ENCODE measurements at regions of chr11 and their contacts with region 1.

Region 1: GRCh38 chr11:65432686-65433582 is 10.3 kb downstream of the NEAT1 start:
- DNase-seq: peak in 4 of 5 donors; percentile 55 to 68 (median 60)
- H3K4me3 ChIP-seq: no peak overlapping the region
- H3K4me3 Mint-ChIP-seq: peak overlapping the region in 5 of 8 donors; percentile 27 to 61 (median 40)
- H3K27ac ChIP-seq: peak overlapping the region; percentile 2
- H3K27ac Mint-ChIP-seq: peak overlapping the region; percentile 77 to 94 (median 89)
- H3K4me1 ChIP-seq: peaks cover 77% of the 10 kb centered on the region
- H3K4me1 Mint-ChIP-seq: peaks cover 65 to 92% (median 76%) of the 10 kb centered on the region in 4 donors
- H3K27me3 ChIP-seq: no peaks in the 10 kb centered on the region
- H3K27me3 Mint-ChIP-seq: no peaks in the 10 kb centered on the region

Region 2: DNA sequence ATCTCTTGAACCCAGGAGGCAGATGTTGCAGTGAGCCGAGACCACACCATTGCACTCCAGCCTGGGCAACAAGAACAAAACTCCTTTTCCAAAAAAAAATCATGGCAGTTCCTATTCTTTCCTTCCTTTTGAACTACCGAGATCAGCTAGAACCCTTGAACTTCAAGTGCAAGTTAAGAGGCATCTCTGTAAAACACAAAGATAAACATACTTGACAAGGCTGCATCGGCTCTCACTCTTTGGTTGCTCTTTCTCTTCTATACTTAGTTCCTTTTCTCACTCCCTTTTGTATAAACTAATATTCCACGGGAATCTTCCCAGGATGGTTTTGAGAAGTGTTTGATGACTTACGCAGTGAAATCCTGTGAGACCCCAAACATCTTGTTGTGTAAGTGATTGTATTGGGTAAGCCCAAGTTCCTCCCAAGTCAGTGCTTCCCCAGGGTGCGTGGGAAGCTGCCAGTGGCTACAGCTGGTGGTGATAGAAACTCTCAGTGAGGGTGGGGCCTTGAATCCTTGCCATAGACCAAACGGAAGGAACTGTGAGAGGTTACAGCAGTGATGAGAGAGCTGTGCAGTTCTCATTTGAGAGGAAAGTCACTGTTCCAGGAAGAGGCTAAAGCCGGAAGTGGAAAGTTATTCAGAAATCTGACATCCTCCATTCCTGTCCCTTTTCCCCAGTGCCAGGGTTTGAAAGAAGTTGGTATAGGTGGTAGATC is 142.3 kb before region 1 on chr11:
- CTCF ChIA-PET with region 1: no interaction called
- POLR2A ChIA-PET with region 1: no interaction called
- intact Hi-C with region 1: no loop called
- DNase-seq: no peak
- H3K4me3 ChIP-seq: no peak overlapping the region
- H3K4me3 Mint-ChIP-seq: peak overlapping the region in 1 of 8 donors; percentile 41
- H3K27ac ChIP-seq: no peak overlapping the region
- H3K27ac Mint-ChIP-seq: peak overlapping the region in 3 of 7 donors; percentile 22 to 62 (median 48)
- H3K4me1 ChIP-seq: no peaks in the 10 kb centered on the region
- H3K4me1 Mint-ChIP-seq: peaks cover 0 to 5% (median 1%) of the 10 kb centered on the region in 4 donors
- H3K27me3 ChIP-seq: no peaks in the 10 kb centered on the region
- H3K27me3 Mint-ChIP-seq: no peaks in the 10 kb centered on the region

Region 3: DNA sequence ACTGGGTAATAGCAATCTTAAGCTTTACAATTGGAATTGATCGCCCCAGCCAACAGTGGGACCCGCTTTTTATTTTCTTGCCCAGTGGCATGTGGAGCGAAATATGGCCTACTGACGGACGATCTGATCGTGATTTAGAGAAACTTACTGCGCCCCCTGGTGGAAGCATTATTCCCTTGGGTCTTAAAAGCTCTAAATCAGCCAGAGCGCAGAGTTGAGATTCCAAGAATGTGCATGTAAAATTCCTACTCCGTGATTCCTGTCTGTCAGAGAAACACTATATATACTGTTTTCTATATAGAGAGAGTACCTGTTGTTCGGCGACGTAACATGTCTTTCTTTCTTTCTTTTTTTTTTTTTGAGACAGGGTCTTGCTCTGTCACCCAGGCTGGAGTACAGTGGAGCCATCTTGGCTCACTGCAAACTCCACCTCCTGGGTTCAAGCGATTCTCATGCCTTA is 103.0 kb before region 1 on chr11:
- CTCF ChIA-PET with region 1: no interaction called
- POLR2A ChIA-PET with region 1: no interaction called
- intact Hi-C with region 1: no loop called
- DNase-seq: peak; percentile 69 to 81 (median 75)
- H3K4me3 ChIP-seq: no peak overlapping the region
- H3K4me3 Mint-ChIP-seq: peak overlapping the region in 3 of 8 donors; percentile 28 to 64 (median 43)
- H3K27ac ChIP-seq: no peak overlapping the region
- H3K27ac Mint-ChIP-seq: peak overlapping the region in 4 of 7 donors; percentile 53 to 86 (median 68)
- H3K4me1 ChIP-seq: peaks cover 11% of the 10 kb centered on the region
- H3K4me1 Mint-ChIP-seq: peaks cover 8 to 22% (median 14%) of the 10 kb centered on the region in 4 donors
- H3K27me3 ChIP-seq: no peaks in the 10 kb centered on the region
- H3K27me3 Mint-ChIP-seq: peaks cover 0 to 2% of the 10 kb centered on the region in 2 donors

Region 4: DNA sequence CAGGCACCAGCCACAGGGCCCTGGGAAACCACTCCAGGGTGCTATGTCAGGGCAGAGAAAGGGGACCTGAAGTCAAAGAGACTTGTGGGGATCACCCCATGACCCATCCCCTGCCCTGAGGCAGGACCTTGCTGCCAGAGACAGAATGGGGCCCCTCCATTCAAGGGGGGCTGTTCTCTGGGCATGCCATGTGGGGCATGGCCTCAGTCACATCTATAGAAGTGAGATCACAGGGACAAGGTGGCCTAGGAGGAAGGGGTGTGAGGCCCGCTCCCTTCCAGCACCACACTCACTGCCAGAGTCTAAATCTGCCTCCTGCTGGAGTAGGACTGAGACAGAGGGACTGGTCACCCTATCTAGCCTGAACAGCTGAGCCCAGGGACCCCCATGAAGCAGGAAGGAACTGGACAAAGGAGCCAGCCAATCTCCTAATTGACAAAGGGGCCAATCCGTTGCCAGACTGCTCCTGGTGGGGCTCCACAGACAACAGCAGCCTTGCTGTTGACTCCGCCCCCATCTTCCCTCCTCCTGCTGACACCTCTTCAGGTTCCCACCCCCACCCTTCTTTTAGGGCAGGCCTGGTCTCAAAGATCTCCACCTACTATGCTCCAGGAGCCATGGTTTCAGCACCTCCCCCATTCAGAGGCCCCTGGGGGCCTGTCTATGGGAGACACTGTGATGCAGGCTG is 15.6 kb after region 1 on chr11:
- CTCF ChIA-PET with region 1: interaction called, 3 read pairs
- POLR2A ChIA-PET with region 1: interaction called, 224 read pairs
- intact Hi-C with region 1: no loop called
- DNase-seq: peak in 1 of 5 donors; percentile 33
- H3K4me3 ChIP-seq: no peak overlapping the region
- H3K4me3 Mint-ChIP-seq: no peak overlapping the region
- H3K27ac ChIP-seq: no peak overlapping the region
- H3K27ac Mint-ChIP-seq: peak overlapping the region in 5 of 7 donors; percentile 38 to 64 (median 53)
- H3K4me1 ChIP-seq: no peaks in the 10 kb centered on the region
- H3K4me1 Mint-ChIP-seq: peaks cover 3 to 17% (median 4%) of the 10 kb centered on the region in 4 donors
- H3K27me3 ChIP-seq: no peaks in the 10 kb centered on the region
- H3K27me3 Mint-ChIP-seq: no peaks in the 10 kb centered on the region

Region 5: DNA sequence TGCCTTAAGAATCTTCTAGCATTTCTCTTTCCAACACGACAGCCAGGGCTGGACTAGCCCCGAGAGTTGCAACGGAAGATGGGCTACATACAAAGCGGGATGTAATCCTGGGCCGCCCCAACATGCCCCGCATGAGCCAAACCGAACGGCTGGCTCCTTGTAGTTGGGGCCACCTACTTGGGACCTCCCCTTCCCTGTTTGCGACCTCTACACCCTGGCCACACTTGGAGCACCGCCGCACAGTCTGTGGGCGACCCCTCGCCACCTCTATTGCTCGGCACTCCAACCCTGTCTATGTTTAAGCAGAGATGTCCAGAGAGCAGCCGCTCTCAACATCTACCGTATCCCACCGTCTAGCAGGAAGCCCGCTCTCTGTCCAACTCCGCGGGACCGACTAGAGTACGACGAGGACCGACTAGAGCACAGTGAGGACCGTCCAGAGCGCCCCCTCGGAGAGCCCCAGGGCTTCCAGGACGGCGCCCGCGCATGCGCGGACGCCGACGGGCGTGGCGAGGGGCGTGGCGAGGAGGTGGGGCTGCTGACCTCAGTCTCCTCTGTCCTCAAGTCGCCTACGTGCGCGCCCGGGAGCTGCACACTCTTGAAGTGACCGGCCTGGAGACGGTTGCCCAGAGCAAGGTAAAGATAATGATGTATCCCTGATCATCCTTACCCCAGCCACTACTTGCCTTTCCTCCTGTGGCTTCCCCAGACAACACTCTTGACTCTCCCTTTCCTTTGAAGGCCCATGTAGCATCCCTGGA is 21.9 kb after region 1 on chr11:
- CTCF ChIA-PET with region 1: no interaction called
- POLR2A ChIA-PET with region 1: interaction called, 679 read pairs
- intact Hi-C with region 1: loop called (anchors 2 kb)
- DNase-seq: peak; percentile 55 to 76 (median 64)
- H3K4me3 ChIP-seq: peak overlapping the region; percentile 78 to 84
- H3K4me3 Mint-ChIP-seq: peak overlapping the region; percentile 85 to 91 (median 88)
- H3K27ac ChIP-seq: peak overlapping the region; percentile 64
- H3K27ac Mint-ChIP-seq: peak overlapping the region; percentile 84 to 97 (median 89)
- H3K4me1 ChIP-seq: peaks cover 12% of the 10 kb centered on the region
- H3K4me1 Mint-ChIP-seq: peaks cover 11 to 34% (median 16%) of the 10 kb centered on the region in 4 donors
- H3K27me3 ChIP-seq: no peaks in the 10 kb centered on the region
- H3K27me3 Mint-ChIP-seq: no peaks in the 10 kb centered on the region

Measured in CD4-positive, alpha-beta memory T cell (primary cell).